ENCODE measurements at regions of chr7 and their contacts with region 1.

Region 1: DNA sequence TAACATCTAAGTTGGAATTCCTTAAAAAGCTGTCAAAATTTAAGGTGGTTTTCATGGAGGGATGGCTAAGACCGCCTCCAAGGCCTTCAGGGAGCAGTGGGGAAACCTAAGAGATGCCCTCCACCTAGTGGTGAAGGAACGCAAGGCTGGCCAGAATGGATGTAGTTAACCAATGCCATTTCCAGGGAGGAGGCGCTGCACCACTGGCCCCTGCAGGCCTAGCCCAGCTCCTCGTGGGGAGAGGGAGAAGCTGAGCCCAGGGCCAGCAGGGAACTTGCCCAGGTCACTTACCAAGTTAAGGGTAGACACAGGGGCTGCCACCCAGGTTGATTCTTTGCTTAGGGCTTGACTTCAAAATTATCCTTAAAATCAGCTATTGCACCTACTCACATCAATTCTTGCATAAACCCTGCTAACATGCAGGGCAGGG is 32.0 kb downstream of the FIGNL1 start:
- H3K4me3 ChIP-seq: no peak overlapping the region
- H3K27ac ChIP-seq: no peak overlapping the region
- H3K4me1 ChIP-seq: no peaks in the 10 kb centered on the region
- CTCF ChIP-seq: peak; percentile 74

Region 2: DNA sequence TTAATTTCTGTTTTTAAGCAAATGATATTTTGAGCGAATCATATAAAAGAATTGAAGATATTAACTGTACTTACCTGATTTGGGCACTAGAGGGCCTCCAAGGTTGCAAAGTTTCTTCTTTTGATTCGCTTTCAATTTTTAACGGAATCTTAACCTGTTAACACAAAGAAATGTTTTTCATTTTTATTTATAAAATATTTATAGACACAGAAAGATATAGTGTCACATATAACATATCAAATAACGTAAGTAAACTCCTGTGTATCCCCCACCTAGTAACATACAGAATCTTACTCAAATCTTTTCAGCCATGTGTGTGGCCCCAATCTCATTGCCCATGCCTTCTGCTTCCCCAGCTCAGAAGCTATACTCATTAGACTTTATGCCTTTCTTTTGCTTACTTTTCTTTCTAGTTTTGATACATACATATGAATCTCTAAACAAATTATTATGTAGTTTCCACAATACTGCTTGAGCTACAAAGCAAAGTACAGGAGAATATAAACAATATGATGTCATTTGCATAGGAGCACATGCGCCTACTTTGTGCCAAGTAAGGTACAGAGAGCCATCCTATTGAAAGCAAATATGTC is 275.6 kb before region 1 on chr7:
- CTCF ChIA-PET with region 1: interaction called, 18 read pairs
- POLR2A ChIA-PET with region 1: no interaction called
- H3K4me3 ChIP-seq: no peak overlapping the region
- H3K27ac ChIP-seq: no peak overlapping the region
- H3K4me1 ChIP-seq: no peaks in the 10 kb centered on the region
- CTCF ChIP-seq: no peak

Region 3: DNA sequence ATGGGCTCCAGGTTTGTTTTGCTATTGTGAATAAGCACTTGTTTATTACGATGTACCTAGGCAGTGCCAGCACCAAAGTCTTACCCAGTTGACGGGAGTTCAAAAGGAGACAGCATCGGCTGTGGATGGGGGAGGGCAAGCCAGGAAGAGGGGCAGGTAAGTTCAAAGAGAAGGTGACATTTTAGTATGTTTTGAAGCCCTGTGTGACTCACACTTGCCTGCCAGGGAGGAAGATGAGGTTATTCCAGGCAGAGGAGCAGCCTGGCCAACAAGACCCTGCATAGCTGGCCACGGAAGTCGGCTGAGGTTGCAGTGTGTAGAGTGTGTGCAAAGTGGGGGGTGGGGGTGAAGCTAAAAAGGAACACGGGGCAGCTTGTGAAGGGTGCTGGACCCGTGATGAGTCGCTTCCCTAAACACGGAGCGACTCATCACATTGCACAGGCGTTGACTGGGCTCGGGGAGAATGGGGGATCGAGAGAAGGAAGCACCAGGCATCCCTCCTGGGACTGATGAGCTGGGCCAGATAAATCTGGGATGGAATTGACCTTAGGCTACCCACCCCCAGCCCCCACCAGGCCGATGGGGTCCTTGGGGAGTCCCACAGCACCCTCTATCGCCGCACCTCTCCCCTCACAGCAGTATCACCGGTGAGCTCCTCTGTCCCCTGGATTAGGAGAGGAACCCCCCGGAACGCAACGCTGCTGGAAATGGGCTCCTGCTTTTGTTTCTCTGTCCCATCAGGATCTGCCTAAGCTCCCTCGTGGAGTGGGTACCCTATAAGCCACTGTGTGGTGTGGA is 211.4 kb before region 1 on chr7:
- CTCF ChIA-PET with region 1: interaction called, 30 read pairs
- POLR2A ChIA-PET with region 1: no interaction called
- H3K4me3 ChIP-seq: no peak overlapping the region
- H3K27ac ChIP-seq: no peak overlapping the region
- H3K4me1 ChIP-seq: no peaks in the 10 kb centered on the region
- CTCF ChIP-seq: no peak

Region 4: GRCh38 chr7:50431316-50431715 is 13.2 kb after region 1 on chr7:
- CTCF ChIA-PET with region 1: interaction called, 10 read pairs
- POLR2A ChIA-PET with region 1: no interaction called
- H3K4me3 ChIP-seq: no peak overlapping the region
- H3K27ac ChIP-seq: no peak overlapping the region
- H3K4me1 ChIP-seq: no peaks in the 10 kb centered on the region
- CTCF ChIP-seq: no peak

Measured in HEK293 (cell line).